ENCODE measurements at regions of chr3 and their contacts with region 1.

Region 1: GRCh38 chr3:43155464-43156121 is 49.7 kb upstream of the POMGNT2 start:
- DNase-seq: peak in 4 of 5 donors; percentile 56 to 83 (median 66)
- H3K4me3 ChIP-seq: no peak overlapping the region
- H3K27ac ChIP-seq: no peak overlapping the region
- H3K4me1 ChIP-seq: no peaks in the 10 kb centered on the region
- H3K27me3 ChIP-seq: no peaks in the 10 kb centered on the region
- CTCF ChIP-seq: peak; percentile 72

Region 2: GRCh38 chr3:42936157-42936981 is 219.2 kb before region 1 on chr3:
- intact Hi-C with region 1: no loop called
- DNase-seq: peak; percentile 61 to 85 (median 77)
- H3K4me3 ChIP-seq: peak overlapping the region; percentile 33 to 67 (median 48)
- H3K27ac ChIP-seq: no peak overlapping the region
- H3K4me1 ChIP-seq: no peaks in the 10 kb centered on the region
- H3K27me3 ChIP-seq: no peaks in the 10 kb centered on the region
- CTCF ChIP-seq: no peak

Region 3: DNA sequence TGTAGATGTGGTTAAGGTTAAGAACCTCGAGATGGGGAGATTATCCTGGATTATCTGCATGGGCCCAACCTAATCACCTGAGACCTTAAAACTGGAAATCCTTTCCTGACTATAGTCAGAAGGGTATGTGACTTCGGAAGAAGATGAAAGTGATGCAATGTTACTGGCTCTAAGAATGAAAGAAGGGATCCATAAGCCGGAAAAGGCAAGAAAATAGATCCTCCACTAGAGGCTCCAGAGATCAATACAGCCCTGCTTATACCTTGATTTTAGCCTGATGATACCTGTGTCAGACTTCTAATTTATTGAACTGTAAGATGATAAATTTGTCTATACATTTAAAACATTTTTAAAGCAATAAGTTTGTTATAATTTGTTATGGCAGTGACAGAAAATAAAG is 198.0 kb before region 1 on chr3:
- intact Hi-C with region 1: loop called (anchors 10 kb)
- DNase-seq: no peak
- H3K4me3 ChIP-seq: no peak overlapping the region
- H3K27ac ChIP-seq: no peak overlapping the region
- H3K4me1 ChIP-seq: no peaks in the 10 kb centered on the region
- H3K27me3 ChIP-seq: no peaks in the 10 kb centered on the region
- CTCF ChIP-seq: no peak

Region 4: DNA sequence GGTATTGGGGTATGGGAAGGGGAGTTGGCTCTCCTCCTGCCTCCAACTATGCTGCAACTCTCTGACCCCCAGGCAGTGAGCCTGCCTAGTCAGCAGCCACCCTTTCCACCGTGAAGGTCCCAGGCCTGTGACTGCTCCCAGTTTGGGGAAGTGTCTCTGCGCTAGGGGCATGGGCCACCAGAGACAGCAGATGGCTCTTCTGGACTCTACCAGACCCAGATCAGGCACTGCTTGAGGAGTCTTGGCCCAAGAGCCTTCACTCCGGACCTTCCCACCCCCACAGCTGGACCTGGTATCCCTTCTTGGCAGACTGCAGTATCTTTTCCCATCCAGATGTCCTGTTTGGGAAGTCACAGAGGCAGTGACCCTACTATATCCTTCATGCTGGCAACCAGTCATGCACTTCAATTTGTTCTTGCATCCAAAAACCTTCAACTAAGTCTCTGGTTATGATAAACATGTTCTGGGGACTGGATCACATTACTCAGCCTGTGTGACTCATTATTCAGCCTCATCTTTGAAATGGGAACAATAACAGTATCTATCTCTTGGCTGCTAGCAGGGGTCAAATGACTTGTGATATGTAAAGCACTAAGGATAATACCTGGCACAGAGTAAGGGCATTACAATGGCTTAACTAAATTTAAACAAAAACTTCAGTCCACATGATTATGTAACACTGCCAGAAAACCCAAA is 112.4 kb before region 1 on chr3:
- intact Hi-C with region 1: no loop called
- DNase-seq: no peak
- H3K4me3 ChIP-seq: no peak overlapping the region
- H3K27ac ChIP-seq: no peak overlapping the region
- H3K4me1 ChIP-seq: peaks cover 0 to 5% (median 0%) of the 10 kb centered on the region in 3 donors
- H3K27me3 ChIP-seq: no peaks in the 10 kb centered on the region
- CTCF ChIP-seq: no peak

Region 5: DNA sequence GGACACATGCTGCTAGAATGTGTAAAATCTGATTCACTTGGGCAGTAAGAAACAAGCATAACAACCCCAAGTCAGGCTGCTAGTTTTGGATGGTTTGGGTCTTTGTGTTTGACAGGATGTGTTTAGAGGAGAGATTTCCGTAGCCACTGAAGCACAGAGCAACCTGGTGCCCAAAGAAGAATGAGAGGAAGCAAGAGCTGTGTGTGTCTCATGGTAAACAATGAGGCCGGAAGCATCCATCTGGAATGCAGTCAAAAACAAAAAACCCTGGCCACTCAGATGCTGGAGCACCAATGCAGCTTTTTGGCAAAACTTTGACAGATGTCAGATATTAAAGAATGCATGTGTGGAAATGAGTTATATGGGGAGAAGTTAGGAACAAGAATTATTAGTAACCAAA is 91.4 kb after region 1 on chr3:
- intact Hi-C with region 1: no loop called
- DNase-seq: peak in 2 of 5 donors; percentile 8 to 47
- H3K4me3 ChIP-seq: no peak overlapping the region
- H3K27ac ChIP-seq: no peak overlapping the region
- H3K4me1 ChIP-seq: no peaks in the 10 kb centered on the region
- H3K27me3 ChIP-seq: no peaks in the 10 kb centered on the region
- CTCF ChIP-seq: no peak

Region 6: GRCh38 chr3:43503067-43503728 is 347.6 kb after region 1 on chr3:
- intact Hi-C with region 1: loop called (anchors 10 kb)
- DNase-seq: peak in 2 of 5 donors; percentile 40 to 49
- H3K4me3 ChIP-seq: no peak overlapping the region
- H3K27ac ChIP-seq: no peak overlapping the region
- H3K4me1 ChIP-seq: peaks cover 0 to 5% (median 0%) of the 10 kb centered on the region in 3 donors
- H3K27me3 ChIP-seq: no peaks in the 10 kb centered on the region
- CTCF ChIP-seq: peak; percentile 45